T-cell (primary cell): ENCODE measurements at regions of chr5 and their contacts with region 1.

Region 1: DNA sequence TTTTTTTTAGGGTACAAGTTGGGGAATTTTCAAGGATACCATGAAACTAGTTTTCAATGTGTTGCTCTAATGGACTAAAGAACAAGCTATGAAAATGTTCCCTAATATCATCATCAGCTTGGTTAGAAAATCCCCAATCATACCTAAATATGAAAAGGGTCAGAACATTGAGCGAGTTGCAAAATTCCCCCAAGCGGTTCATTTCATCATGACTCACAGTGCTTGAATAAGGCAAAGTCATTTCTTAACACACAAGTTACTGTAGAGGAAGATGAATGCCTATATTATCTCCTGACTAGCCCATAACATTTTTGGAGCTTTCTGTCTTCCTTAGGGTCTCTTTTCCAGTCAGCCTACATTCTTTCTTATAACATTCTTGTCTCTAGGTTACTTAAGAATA is 62.7 kb downstream of the ST8SIA4 start:
- DNase-seq: peak in 6 of 35 experiments; percentile 1 to 60 (median 6)
- ATAC-seq: peak in 3 of 4 experiments; percentile 42 to 70 (median 51)
- H3K4me3 ChIP-seq: no peak overlapping the region
- H3K4me3 Mint-ChIP-seq: peak overlapping the region in 1 of 3 donors; percentile 63
- H3K27ac ChIP-seq: no peak overlapping the region
- H3K27ac Mint-ChIP-seq: peak overlapping the region; percentile 86 to 88
- H3K4me1 ChIP-seq: peaks cover 3 to 21% of the 10 kb centered on the region in 2 experiments
- H3K4me1 Mint-ChIP-seq: peaks cover 65 to 69% (median 65%) of the 10 kb centered on the region in 3 donors
- H3K27me3 ChIP-seq: no peaks in the 10 kb centered on the region
- H3K27me3 Mint-ChIP-seq: no peaks in the 10 kb centered on the region

Region 2: GRCh38 chr5:100852988-100853449 is 12.6 kb after region 1 on chr5:
- CTCF ChIA-PET with region 1: interaction called in 1 of 2 experiments, 10 read pairs
- POLR2A ChIA-PET with region 1: interaction called in 1 of 2 experiments, 3 read pairs
- DNase-seq: peak in 1 of 35 experiments; percentile 16
- ATAC-seq: peak; percentile 34 to 69 (median 64)
- H3K4me3 ChIP-seq: no peak overlapping the region
- H3K4me3 Mint-ChIP-seq: peak overlapping the region; percentile 22 to 62 (median 29)
- H3K27ac ChIP-seq: peak overlapping the region; percentile 25
- H3K27ac Mint-ChIP-seq: peak overlapping the region; percentile 78 to 85
- H3K4me1 ChIP-seq: peaks cover 7 to 17% of the 10 kb centered on the region in 2 experiments
- H3K4me1 Mint-ChIP-seq: peaks cover 41 to 46% (median 44%) of the 10 kb centered on the region in 3 donors
- H3K27me3 ChIP-seq: no peaks in the 10 kb centered on the region
- H3K27me3 Mint-ChIP-seq: no peaks in the 10 kb centered on the region